WTC11 (cell line): ENCODE measurements at regions of chr6 and their contacts with region 1.

Region 1: DNA sequence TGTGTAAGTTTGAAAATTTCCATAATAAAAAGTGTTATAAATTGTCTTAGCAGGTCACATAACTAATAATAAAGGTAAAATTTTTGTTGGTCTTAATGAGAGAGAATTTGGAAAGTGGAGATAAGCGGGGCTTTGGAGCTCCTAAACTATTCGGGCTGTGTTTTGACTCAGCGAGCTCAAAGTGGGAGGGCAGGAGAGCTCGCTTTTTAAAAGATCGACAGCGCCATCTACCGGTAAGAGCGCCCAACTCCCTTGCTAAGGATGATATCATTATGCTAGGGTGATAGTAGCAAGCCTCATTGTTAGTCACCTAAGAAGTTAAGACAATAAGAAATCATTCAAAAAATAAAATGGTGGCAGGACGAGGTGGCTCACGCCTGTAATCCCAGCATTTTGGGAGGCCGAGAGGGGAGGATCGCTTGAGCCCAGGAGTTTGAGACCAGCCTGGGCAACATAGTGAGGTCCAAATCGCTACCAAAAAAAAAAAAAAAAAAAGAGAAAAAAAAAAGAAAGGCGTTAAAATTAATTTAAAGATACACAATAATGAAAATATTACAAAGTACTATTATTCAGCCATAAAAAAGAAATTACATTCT is 24.8 kb downstream of the C6orf15 start:
- DNase-seq: peak; percentile 91
- ATAC-seq: peak; percentile 86
- H3K4me3 Mint-ChIP-seq: no peak overlapping the region
- H3K27ac Mint-ChIP-seq: peak overlapping the region; percentile 68; the same call in 1 of the 2 replicates
- H3K4me1 Mint-ChIP-seq: peaks cover 13% of the 10 kb centered on the region
- H3K27me3 Mint-ChIP-seq: no peaks in the 10 kb centered on the region
- CTCF ChIP-seq: peak; percentile 82

Region 2: DNA sequence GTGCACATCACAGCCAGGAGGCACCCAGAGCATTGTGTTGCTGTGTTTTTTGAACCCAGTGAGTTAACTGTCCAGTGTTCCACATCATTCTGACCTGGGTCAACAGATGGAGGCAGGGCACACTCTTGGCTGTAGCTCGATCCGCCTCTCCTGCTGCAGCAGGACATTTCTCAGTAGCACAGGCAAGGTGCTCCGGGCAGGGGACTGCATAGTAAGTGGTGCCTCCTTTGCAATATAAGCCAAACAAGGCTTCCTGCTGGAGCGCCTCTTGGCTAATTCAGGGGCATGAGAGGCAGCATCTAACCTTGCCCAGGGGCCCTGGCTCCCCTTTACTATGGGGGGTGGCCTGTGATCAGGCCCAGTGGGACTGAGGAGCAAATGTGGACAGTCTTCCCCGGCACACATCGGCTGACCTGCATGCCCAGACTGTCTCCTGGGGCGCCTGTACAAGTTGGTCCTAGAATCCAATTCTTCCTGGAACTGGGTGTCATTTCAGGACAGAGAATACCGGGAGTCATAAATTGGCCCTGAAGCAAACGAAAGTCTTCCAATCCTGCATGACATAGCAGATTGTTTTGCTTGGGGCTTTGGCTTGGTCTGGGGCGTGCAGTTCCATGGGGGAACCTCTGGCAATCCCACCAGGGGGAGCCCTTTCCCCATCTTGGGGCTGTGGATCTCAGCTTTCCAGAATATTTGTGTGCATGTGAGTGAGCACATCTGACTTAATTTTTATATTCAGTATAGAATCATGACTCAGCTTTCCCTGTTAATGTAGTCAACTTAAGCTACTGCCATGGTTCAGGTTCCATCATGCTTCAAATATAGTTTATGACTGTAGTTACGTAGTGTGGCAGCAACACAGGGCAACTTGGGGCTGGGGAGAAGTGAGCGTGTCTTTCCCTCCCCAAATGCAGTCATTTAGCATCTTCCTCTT is 259.3 kb before region 1 on chr6:
- CTCF ChIA-PET with region 1: interaction called, 22 read pairs
- POLR2A ChIA-PET with region 1: no interaction called
- DNase-seq: peak; percentile 87
- ATAC-seq: peak; percentile 81
- H3K4me3 Mint-ChIP-seq: no peak overlapping the region
- H3K27ac Mint-ChIP-seq: peak overlapping the region; percentile 66; the same call in 1 of the 2 replicates
- H3K4me1 Mint-ChIP-seq: peaks cover 40% of the 10 kb centered on the region
- H3K27me3 Mint-ChIP-seq: no peaks in the 10 kb centered on the region
- CTCF ChIP-seq: peak; percentile 79

Region 3: DNA sequence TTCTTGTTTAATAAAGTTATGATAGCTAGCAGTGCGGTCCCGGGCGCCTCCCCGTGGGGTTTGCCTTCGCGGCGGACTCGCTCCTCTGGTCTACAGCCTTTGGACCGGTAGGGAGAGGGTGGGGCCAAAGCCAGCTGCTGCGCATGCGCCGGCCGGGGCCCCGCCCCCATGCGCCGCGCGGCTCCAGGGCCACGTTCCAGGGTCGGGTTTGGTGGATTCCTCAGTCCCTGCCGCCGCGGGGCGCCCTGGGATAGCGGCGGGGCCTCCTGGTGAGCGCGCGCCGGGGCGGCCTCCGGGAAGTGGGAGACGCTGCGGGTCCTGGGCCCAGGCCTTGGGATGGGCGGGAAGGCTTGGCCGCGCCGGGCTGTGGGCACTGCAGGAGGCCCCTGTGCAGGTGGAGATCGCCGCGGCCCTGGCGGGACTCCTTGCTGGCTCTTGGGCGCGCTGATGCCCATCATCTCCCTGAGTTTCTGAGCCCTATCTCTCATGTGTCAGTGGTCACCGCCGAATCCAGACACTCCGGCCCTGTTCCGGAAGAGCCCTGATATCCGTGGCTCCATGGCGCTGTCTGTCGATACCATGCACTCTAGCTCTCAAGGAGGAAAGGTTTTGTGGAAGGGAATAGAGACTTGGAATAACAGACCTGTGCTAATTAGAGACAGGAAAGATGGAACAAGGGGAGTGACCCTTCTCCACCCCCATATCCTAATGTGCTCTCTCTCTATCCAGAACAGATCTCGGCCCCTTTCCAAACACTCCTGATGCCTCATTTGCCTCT is 173.3 kb before region 1 on chr6 and contains the start of gene VARS2:
- CTCF ChIA-PET with region 1: interaction called, 106 read pairs
- POLR2A ChIA-PET with region 1: interaction called, 4 read pairs
- DNase-seq: peak; percentile 83
- ATAC-seq: peak; percentile 85
- H3K4me3 Mint-ChIP-seq: peak within 1 kb of the TSS; percentile 90
- H3K27ac Mint-ChIP-seq: peak within 1 kb of the TSS; percentile 90
- H3K4me1 Mint-ChIP-seq: peaks cover 22% of the 10 kb centered on the region
- H3K27me3 Mint-ChIP-seq: no peaks in the 10 kb centered on the region
- CTCF ChIP-seq: no peak
- total RNA-seq, gene VARS2: 65.6 to 74.1 TPM (median 69.9 TPM) in 3 replicates

Region 4: DNA sequence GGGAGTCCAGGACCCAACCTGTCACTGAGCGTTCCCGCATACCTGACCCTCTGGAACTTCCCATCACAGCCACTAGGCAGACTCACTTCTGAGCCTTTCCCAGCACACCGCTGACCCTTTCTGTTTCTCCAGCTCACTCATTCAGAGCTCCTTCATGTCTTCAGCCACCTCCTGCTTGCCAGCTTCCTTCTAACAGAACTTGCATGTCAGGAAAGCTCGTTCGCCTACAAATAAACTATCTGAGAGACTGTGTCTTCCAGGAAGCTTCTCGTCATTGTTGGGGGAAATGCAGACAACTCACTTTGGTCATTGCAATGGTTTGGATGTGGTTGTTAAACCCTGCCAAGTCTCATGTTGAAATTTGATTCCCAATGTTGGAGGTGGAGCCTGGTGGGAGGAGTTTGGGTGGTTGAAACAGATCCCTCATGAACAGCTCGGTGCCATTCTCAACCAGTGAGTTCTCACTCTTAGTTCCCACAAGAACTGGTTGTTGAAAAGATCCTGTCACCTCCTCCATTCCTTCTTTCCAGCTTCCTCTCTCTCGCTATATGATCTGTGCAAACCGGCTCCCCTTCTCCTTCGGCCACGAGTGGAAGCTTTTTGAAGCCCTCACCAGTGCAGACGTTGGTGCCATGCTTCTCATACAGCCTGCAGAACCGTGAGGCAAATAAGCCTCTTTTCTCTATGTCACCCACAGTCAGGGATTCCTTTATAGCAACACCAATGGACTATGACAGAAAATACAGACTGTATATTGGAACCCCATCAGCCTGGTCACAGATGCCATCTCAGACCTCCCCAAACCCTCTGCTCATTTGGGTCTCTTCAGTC is 105.4 kb before region 1 on chr6:
- CTCF ChIA-PET with region 1: interaction called, 22 read pairs
- POLR2A ChIA-PET with region 1: no interaction called
- DNase-seq: peak; percentile 67
- ATAC-seq: peak; percentile 99
- H3K4me3 Mint-ChIP-seq: peak overlapping the region; percentile 57
- H3K27ac Mint-ChIP-seq: peak overlapping the region; percentile 92
- H3K4me1 Mint-ChIP-seq: peaks cover 21% of the 10 kb centered on the region
- H3K27me3 Mint-ChIP-seq: no peaks in the 10 kb centered on the region; the same call in none of the 2 replicates
- CTCF ChIP-seq: no peak

Region 5: GRCh38 chr6:31068669-31069340 is 18.8 kb before region 1 on chr6:
- CTCF ChIA-PET with region 1: interaction called, 40 read pairs
- POLR2A ChIA-PET with region 1: interaction called, 10 read pairs
- DNase-seq: peak; percentile 84
- ATAC-seq: peak; percentile 62
- H3K4me3 Mint-ChIP-seq: no peak overlapping the region
- H3K27ac Mint-ChIP-seq: 0 out of 2 replicates have a peak overlapping the region, but pooled peaks have one; percentile 42
- H3K4me1 Mint-ChIP-seq: peaks cover 25% of the 10 kb centered on the region
- H3K27me3 Mint-ChIP-seq: no peaks in the 10 kb centered on the region
- CTCF ChIP-seq: peak; percentile 90

Region 6: GRCh38 chr6:31114970-31115849 is 27.6 kb after region 1 on chr6:
- CTCF ChIA-PET with region 1: interaction called, 33 read pairs
- POLR2A ChIA-PET with region 1: interaction called, 3 read pairs
- DNase-seq: no peak
- ATAC-seq: peak; percentile 70
- H3K4me3 Mint-ChIP-seq: no peak overlapping the region
- H3K27ac Mint-ChIP-seq: no peak overlapping the region
- H3K4me1 Mint-ChIP-seq: peaks cover 30% of the 10 kb centered on the region
- H3K27me3 Mint-ChIP-seq: peaks cover 22% of the 10 kb centered on the region
- CTCF ChIP-seq: no peak